ENCODE measurements at regions of chr1 and their contacts with region 1.

Region 1: DNA sequence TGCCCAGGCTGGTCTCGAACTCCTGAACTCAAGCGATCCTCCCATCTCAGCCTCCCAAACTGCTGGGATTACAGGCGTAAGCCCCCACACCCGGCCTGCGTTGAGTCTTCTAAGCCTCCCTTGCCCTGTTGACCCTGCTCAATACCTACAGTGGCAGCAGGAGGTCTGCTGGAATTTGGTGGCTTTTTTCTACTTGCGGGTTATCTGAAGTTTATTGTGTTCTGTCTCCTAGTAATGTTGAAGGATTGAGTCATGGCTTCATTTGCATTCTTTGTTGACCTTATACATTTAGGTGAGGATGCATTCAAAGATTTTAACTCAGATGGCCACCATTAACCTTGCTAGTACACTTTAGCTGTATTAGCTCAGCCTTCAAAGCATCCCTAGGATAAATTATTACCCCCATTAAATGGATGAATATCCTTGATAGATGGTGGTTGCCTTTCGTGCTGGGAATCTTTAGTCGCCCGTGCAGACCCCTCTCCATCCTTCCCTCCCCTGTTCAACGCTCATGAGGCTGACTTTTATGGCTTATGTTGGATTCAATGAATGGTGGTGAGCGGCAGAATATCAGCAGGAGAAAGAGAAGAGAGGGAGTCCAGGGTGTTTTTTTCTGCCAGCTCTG is 9.7 kb upstream of the NPPB start:
- DNase-seq: no peak
- ATAC-seq: no peak
- H3K4me3 ChIP-seq: no peak overlapping the region
- H3K27ac ChIP-seq: no peak overlapping the region
- H3K4me1 ChIP-seq: no peaks in the 10 kb centered on the region
- CTCF ChIP-seq: no peak
- EP300 ChIP-seq: no peak
- POLR2A ChIP-seq: no peak
- RAD21 ChIP-seq: no peak

Region 2: DNA sequence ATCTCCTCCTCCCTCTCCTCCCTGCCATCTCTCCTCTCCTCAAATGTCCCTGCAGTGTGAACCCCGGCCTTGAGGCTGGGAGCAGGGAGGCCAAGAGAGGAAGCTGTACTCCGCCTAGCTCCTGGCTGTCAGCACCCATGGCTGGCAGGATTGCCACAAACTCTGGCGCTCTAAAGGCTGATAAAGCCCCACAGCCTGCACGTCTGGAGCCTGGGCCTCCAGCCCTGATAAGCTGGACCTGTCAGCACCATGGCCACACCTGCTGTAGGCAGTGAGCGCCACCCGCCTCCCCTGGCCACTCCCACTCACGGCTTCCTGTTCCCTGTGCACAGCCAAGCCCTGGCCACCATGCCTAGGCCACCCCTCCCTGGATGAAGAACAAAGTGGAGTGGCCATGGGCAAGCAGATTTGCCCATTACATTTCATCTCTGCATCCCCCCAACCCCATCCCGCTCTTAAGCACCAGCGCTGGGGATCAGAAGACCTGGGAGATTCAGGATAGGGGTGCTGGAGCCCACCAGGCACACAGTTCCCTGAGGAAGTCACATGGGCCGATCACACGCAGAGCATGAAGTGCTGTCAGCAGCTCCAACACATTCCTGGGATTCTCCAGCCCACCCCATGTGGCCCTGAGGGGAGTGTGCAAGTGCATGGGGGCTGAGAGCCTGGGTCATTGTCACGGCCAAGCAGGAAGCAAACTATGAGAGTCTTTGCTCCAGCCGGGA is 14.5 kb after region 1 on chr1:
- CTCF ChIA-PET with region 1: interaction called, 15 read pairs
- POLR2A ChIA-PET with region 1: no interaction called
- DNase-seq: no peak
- ATAC-seq: peak in 1 of 2 experiments; percentile 32; a peak in 2 of 6 replicates
- H3K4me3 ChIP-seq: no peak overlapping the region
- H3K27ac ChIP-seq: no peak overlapping the region
- H3K4me1 ChIP-seq: no peaks in the 10 kb centered on the region
- CTCF ChIP-seq: no peak
- EP300 ChIP-seq: no peak
- POLR2A ChIP-seq: no peak
- RAD21 ChIP-seq: no peak

Region 3: GRCh38 chr1:12095452-12096263 is 227.2 kb after region 1 on chr1:
- CTCF ChIA-PET with region 1: no interaction called
- POLR2A ChIA-PET with region 1: no interaction called
- DNase-seq: peak; percentile 51 to 55
- ATAC-seq: peak in 1 of 2 experiments; percentile 76; a peak in 3 of 6 replicates
- H3K4me3 ChIP-seq: no peak overlapping the region
- H3K27ac ChIP-seq: no peak overlapping the region
- H3K4me1 ChIP-seq: no peaks in the 10 kb centered on the region
- CTCF ChIP-seq: no peak
- EP300 ChIP-seq: no peak
- POLR2A ChIP-seq: no peak
- RAD21 ChIP-seq: no peak

Measured in A549 (cell line).